ENCODE measurements at regions of chr10 and their contacts with region 1.

Region 1: DNA sequence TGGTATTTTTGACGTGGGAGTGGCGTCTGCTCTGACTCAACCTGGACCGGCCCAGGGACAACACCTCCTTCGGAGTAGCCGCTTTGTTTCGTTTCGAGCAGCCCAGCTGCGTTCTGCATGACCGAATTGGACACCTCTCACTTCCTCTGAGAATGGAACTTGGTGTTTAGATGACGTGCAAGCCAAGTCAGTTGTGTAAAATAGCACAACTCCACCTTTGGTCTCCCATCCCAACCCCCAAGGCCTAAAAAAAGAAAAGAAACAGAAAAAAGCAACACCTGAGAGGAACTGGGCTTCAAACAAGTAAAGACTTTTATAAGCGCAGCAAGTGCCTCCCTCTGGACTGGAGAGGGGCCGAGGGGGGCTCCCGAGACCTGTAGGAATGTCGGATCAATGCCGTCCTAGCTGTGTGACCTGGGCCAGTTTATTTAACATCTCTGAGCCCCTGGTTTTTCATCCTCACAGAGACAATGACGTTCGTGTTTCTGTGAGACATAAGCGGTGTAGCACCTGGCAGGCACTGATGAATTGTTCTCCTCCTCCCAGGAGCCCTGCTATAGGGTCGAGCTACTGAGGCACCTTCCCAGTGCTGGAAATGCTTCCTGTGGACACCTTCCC is 52.0 kb upstream of the SMNDC1 start:
- DNase-seq: peak; percentile 79
- ATAC-seq: peak; percentile 68
- H3K4me3 ChIP-seq: peak overlapping the region; percentile 46; the same call in 1 of the 2 replicates
- H3K27ac ChIP-seq: peak overlapping the region; percentile 95
- H3K4me1 ChIP-seq: peaks cover 61% of the 10 kb centered on the region
- H3K27me3 ChIP-seq: no peaks in the 10 kb centered on the region
- CTCF ChIP-seq: no peak

Region 2: DNA sequence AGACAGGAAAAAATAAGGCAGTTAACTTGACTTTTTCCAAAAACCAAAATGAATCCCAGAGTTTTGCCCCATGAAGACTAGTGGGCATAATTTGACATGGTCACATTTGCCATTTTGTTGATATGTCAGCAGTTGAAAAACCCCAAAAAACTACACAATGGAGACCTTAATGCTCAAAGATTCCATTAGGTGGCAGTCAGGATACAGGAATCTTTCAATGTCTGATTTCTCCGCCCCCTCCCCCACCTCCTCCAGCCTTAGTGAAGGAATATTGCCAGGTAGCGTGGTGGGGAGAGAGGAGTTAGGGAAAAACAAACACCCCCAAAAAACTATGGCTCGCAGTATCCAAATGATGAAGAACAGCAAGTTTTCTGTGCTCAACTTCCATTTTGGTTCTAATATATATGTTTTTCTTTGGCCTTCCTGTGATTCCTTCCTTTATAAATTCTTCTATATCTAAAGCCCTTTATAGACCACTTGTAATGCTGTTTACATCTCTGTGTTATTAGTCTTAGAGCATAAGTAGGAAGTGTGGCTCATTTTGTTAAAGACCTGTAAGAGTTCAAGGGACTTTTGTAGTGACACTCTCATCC is 45.3 kb before region 1 on chr10:
- CTCF ChIA-PET with region 1: interaction called, 3 read pairs
- POLR2A ChIA-PET with region 1: interaction called, 9 read pairs
- intact Hi-C with region 1: loop called (anchors 2 kb)
- DNase-seq: peak; percentile 76
- ATAC-seq: peak; percentile 65
- H3K4me3 ChIP-seq: no peak overlapping the region
- H3K27ac ChIP-seq: peak overlapping the region; percentile 35
- H3K4me1 ChIP-seq: peaks cover 27% of the 10 kb centered on the region
- H3K27me3 ChIP-seq: no peaks in the 10 kb centered on the region
- CTCF ChIP-seq: peak; percentile 73

Region 3: DNA sequence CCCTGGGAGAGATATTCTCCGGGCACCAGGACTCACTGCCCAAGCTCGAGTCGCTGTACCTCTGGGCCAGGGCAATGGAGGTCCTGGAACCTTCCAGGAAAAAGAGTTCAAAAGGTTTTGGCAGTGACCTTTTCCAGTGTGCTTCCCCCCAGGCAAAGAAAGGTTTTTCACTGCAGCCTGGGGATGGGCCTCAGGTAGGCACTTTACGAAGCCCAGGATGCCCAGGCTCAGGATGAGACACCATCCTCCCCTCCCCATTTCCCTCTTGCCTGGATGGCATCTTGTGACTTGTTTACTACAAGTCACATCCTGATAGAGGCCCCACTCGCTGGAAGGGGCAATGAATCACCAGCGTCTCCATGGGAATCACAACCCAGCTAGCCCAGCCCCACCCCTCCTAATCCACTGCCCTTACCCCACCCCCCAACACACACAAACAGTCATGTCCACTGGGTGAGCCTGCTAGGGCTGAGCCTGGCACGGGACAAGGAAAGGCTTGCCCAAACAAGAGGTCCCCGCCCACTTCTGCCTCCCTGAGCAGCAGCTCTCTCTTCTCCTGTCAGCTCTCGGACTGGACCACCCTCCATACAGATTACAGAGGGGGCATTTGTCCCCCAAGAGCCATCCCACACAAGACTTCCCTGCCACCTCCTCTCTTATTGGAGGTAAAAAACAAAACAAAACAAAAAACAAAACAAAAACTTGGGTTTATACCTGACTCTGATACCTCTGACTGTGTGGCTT is 41.9 kb after region 1 on chr10:
- CTCF ChIA-PET with region 1: no interaction called
- POLR2A ChIA-PET with region 1: interaction called, 3 read pairs
- intact Hi-C with region 1: loop called (anchors 1 kb)
- DNase-seq: peak; percentile 96
- ATAC-seq: peak; percentile 82
- H3K4me3 ChIP-seq: peak overlapping the region; percentile 41
- H3K27ac ChIP-seq: peak overlapping the region; percentile 98
- H3K4me1 ChIP-seq: peaks cover 52% of the 10 kb centered on the region
- H3K27me3 ChIP-seq: no peaks in the 10 kb centered on the region
- CTCF ChIP-seq: no peak

Region 4: GRCh38 chr10:110408203-110408751 is 51.5 kb after region 1 on chr10:
- CTCF ChIA-PET with region 1: no interaction called
- POLR2A ChIA-PET with region 1: interaction called, 10 read pairs
- intact Hi-C with region 1: no loop called
- DNase-seq: peak; percentile 94
- ATAC-seq: peak; percentile 59
- H3K4me3 ChIP-seq: no peak overlapping the region
- H3K27ac ChIP-seq: peak overlapping the region; percentile 96
- H3K4me1 ChIP-seq: peaks cover 49% of the 10 kb centered on the region
- H3K27me3 ChIP-seq: no peaks in the 10 kb centered on the region
- CTCF ChIP-seq: no peak

Region 5: DNA sequence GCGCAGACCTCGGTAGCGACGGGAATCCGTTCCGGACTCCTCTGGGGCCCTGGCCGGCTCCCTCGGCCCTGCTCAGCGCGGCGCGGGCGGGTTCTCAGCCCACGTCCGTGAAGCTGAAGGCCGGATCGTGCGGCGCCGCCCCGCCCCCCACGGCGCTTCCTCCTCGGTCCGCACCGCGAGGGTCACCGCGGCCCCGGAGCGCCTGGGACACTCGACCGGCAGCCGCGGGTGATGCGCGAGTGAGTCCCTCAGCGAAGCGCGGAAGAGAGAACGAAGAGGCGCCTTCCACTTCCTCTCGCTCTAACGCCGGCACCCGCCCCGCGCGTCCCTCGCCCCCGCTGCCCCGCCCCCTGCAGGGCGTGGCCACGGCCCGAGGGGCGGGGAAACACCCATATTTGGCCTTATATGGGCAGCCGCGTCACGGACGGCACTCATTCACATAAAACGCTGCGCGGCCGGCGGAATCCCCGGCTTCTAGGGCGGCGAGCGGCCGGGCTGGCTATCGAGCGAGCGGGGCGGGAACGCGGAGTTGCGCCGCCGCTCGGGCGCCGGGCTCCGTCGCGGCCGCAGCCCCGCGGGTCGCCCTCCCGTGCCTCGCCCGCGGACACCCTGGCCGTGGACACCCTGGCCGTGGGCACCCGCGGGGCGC is 140.8 kb after region 1 on chr10 and contains the start of gene DUSP5:
- CTCF ChIA-PET with region 1: no interaction called
- POLR2A ChIA-PET with region 1: interaction called, 3 read pairs
- intact Hi-C with region 1: loop called (anchors 1 kb)
- DNase-seq: peak; percentile 95
- ATAC-seq: peak; percentile 34
- H3K4me3 ChIP-seq: peak within 1 kb of the TSS; percentile 96
- H3K27ac ChIP-seq: peak within 1 kb of the TSS; percentile 80
- H3K4me1 ChIP-seq: peaks cover 38% of the 10 kb centered on the region
- H3K27me3 ChIP-seq: no peaks in the 10 kb centered on the region
- CTCF ChIP-seq: no peak
- total RNA-seq, gene DUSP5: 205 and 206 TPM in 2 replicates